ENCODE measurements at regions of chr1 and their contacts with region 1.

Region 1: GRCh38 chr1:174258148-174258550 is 98.8 kb downstream of the RABGAP1L start:
- DNase-seq: no peak
- H3K4me3 ChIP-seq: no peak overlapping the region
- H3K27ac ChIP-seq: no peak overlapping the region
- H3K4me1 ChIP-seq: no peaks in the 10 kb centered on the region
- H3K27me3 ChIP-seq: no peaks in the 10 kb centered on the region
- CTCF ChIP-seq: peak in 3 of 4 experiments; percentile 29 to 41 (median 34)
- EP300 ChIP-seq: no peak
- POLR2A ChIP-seq: no peak

Region 2: DNA sequence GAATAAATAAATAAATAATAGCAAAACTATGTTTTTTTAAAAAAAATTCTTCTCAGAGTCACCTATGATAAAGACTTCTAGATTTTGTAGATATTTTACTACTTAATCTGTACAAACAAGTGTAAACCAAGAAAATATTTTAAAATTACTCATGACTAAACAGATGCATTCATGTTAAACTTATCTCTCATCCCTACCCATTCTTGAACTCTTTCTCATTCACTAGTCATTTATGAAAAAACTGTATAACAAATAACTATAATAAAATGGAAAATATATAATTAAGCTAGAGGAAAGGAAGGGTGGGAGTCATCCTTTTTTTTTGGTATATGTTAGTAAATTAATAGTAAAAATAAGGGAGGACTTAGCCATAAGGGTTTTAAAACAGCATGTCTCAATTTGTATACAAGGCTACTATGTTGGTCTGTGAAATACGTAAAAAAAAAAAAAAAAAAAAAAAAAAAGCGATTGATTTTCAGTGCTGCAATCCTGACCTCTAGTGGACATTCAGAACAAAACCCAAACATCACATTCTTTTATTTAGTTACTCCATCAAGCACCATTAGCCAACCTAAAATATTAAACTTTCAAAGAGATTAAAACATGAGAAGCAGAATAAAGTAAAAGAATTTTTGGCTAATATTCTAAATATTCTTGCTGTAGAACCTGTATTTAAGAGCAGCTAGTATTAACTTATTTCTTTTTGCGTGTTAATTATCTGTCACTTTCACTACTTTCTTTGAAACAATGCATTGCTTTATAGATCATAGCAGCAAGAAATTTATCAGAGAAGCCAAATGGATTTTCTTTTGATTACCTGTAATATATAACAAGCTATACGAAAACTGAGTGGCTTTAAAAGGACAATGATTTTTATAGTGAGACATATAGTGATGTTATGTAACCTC is 485.8 kb after region 1 on chr1:
- intact Hi-C with region 1: loop called (anchors 2 kb)
- DNase-seq: no peak
- H3K4me3 ChIP-seq: no peak overlapping the region
- H3K27ac ChIP-seq: no peak overlapping the region
- H3K4me1 ChIP-seq: no peaks in the 10 kb centered on the region
- H3K27me3 ChIP-seq: no peaks in the 10 kb centered on the region
- CTCF ChIP-seq: peak in 2 of 4 experiments; percentile 42 to 61
- EP300 ChIP-seq: no peak
- POLR2A ChIP-seq: no peak

Region 3: GRCh38 chr1:175802407-175803131 is 1544.4 kb after region 1 on chr1:
- intact Hi-C with region 1: no loop called
- DNase-seq: no peak
- H3K4me3 ChIP-seq: no peak overlapping the region
- H3K27ac ChIP-seq: no peak overlapping the region
- H3K4me1 ChIP-seq: no peaks in the 10 kb centered on the region
- H3K27me3 ChIP-seq: no peaks in the 10 kb centered on the region
- CTCF ChIP-seq: no peak
- EP300 ChIP-seq: no peak
- POLR2A ChIP-seq: no peak